PC-3 (cell line): ENCODE measurements at regions of chr3 and their contacts with region 1.

Region 1: GRCh38 chr3:168047190-168047795 is 48.4 kb downstream of the GOLIM4 start:
- DNase-seq: peak; percentile 90
- ATAC-seq: peak; percentile 81
- H3K4me3 ChIP-seq: no peak overlapping the region
- H3K27ac ChIP-seq: no peak overlapping the region
- H3K4me1 ChIP-seq: no peaks in the 10 kb centered on the region
- H3K27me3 ChIP-seq: no peaks in the 10 kb centered on the region
- CTCF ChIP-seq: peak; percentile 97

Region 2: DNA sequence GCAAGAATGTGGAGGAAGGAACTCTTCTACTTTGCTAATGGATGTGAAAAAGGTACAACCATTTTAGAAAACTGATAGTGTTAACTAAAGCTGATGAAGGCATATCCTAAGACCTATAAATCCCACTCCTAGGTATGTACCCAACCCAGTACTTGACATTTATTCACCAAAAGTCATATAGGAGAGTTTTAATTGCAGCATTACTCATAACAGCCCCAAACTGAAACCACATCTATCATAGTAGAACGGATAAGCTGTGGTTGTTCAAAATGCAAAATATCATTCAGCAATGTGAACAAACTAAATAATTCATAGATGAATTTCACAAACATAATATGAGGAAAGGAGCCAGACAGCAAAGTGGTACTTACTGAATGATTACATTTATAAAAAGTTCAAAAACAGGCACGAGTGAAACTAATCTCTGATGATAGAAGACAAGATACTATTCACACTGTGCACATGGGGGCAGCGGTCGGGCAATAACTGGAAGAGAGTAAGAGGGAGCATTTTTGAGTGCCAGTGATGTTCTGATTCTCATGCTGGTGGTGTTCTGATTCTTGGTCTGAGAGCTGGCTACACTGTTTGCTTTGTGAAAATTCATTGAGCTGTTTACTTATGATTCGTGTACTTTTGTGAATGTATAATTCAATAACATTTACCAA is 14.2 kb after region 1 on chr3:
- CTCF ChIA-PET with region 1: interaction called, 22 read pairs
- POLR2A ChIA-PET with region 1: no interaction called
- intact Hi-C with region 1: no loop called
- DNase-seq: peak; percentile 28
- ATAC-seq: peak; percentile 91
- H3K4me3 ChIP-seq: 0 out of 2 replicates have a peak overlapping the region, but pooled peaks have one; percentile 3
- H3K27ac ChIP-seq: no peak overlapping the region
- H3K4me1 ChIP-seq: peaks cover 7% of the 10 kb centered on the region; the same call in 1 of the 2 replicates
- H3K27me3 ChIP-seq: no peaks in the 10 kb centered on the region
- CTCF ChIP-seq: peak; percentile 51

Region 3: GRCh38 chr3:168121184-168122017 is 74.1 kb after region 1 on chr3:
- CTCF ChIA-PET with region 1: no interaction called
- POLR2A ChIA-PET with region 1: no interaction called
- intact Hi-C with region 1: loop called (anchors 2 kb)
- DNase-seq: no peak
- ATAC-seq: no peak
- H3K4me3 ChIP-seq: no peak overlapping the region
- H3K27ac ChIP-seq: no peak overlapping the region
- H3K4me1 ChIP-seq: peaks cover 18% of the 10 kb centered on the region
- H3K27me3 ChIP-seq: no peaks in the 10 kb centered on the region
- CTCF ChIP-seq: no peak

Region 4: DNA sequence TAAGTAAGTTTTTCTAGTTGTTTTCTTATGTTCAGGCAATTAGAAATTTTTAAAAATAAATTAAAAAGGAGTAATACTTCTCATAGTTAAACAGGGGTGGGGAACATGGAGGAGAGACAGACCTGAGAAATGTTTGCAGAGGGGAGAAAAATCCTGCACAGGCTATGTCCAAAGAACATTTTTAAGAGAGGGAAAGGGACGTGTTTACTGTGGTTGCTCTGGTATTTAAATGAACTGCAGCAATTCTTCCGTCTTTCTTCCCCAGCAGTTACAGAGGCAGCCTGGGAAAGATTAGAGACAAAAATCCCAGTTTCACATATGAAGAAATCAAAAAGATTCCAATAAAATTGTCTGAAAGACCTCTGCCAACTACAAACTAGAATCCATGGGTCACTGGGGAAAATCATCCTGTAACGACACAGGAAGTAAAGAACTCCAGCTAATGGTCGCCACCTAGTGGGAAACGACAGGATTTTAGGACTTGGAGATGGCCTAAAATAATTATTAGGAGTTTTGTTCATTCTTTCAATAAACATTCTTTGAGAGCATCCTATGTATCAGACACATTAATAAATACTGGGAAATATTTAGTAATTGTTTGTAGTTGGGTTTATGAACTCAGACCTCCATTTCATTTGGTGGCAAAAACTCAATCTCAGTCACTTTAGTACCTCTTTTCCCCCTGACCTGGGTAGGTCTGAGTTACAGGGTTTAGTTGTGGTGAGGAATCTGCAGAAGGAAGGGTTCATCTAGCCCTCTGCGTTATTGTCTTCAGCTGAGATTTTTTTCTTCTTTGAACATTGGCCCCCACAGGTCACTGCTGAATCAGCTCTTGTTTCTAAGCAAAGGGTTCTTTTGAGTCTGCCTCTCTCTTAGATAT is 118.3 kb after region 1 on chr3:
- CTCF ChIA-PET with region 1: interaction called, 12 read pairs
- POLR2A ChIA-PET with region 1: no interaction called
- intact Hi-C with region 1: loop called (anchors 1 kb)
- DNase-seq: peak; percentile 85
- ATAC-seq: peak; percentile 74
- H3K4me3 ChIP-seq: no peak overlapping the region
- H3K27ac ChIP-seq: no peak overlapping the region
- H3K4me1 ChIP-seq: no peaks in the 10 kb centered on the region; the same call in 1 of the 2 replicates
- H3K27me3 ChIP-seq: no peaks in the 10 kb centered on the region
- CTCF ChIP-seq: peak; percentile 91